ENCODE measurements at regions of chr7 and their contacts with region 1.

Region 1: DNA sequence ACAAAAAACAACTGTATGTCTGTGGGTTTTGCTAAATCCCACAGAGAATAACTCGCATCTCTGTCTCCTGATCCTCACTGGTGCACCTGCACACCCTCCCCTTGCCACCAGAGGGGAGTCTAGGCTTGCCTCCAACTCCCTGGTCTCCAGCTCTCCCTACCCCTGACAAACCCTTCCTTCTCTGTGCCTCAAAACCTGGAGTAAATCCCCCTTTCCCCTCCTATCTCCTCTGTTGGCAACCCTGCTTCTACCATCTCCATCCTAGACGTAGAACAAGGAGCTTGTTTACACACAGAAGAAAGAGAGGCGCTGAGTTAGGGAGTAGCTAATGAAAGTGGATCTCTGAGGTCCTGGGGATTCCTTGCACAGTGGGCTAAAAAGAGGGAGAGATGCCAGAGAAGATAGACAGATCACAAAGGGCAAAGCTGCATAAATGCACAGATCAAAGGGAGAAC is 6.0 kb downstream of the MBLAC1 start:
- DNase-seq: peak; percentile 82
- ATAC-seq: peak; percentile 81
- H3K4me3 Mint-ChIP-seq: no peak overlapping the region
- H3K27ac Mint-ChIP-seq: no peak overlapping the region
- H3K4me1 Mint-ChIP-seq: peaks cover 10% of the 10 kb centered on the region
- H3K27me3 Mint-ChIP-seq: no peaks in the 10 kb centered on the region

Region 2: GRCh38 chr7:99975782-99976521 is 156.8 kb before region 1 on chr7 and contains the start of gene AZGP1:
- CTCF ChIA-PET with region 1: interaction called, 5 read pairs
- POLR2A ChIA-PET with region 1: no interaction called
- intact Hi-C with region 1: loop called in 1 of 2 experiments (anchors 1 kb)
- DNase-seq: no peak
- ATAC-seq: no peak
- H3K4me3 Mint-ChIP-seq: no peak within 1 kb of the TSS
- H3K27ac Mint-ChIP-seq: no peak within 1 kb of the TSS
- H3K4me1 Mint-ChIP-seq: peaks cover 12% of the 10 kb centered on the region
- H3K27me3 Mint-ChIP-seq: peaks cover 4% of the 10 kb centered on the region
- total RNA-seq, gene AZGP1: not detected

Region 3: DNA sequence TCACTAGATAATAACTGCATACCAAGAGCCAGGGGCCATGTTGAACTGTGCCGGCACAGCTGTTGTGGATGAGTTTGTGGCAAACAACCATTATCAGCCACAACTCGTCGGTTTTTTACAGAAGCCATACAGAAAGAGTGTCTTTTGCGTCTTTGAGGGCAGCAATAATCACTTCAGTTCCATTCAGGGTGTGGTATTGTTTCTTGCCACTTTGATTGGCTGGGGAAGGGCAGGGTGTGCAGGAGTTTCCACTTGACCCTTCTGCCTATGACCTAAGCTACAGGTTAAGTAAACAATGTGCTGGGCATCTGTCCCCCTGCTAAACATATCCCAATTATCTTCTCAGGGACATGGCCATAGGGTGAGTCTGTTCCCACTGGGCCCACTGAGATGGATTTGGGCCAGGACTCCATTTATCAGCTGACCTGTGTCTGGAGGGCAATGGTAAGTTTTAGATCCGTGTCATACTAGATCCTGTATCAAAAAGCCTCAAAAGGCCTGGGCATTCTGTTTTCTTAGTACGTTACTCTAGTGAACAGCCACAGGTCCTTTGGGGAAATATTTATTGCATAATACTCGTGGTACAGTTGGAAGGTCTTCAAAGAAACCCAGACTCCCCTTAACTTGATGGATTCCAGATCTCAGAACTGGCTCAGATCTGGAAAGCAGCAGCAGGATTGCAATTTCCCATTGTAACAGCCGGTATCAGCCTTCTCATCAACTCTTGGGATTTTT is 67.1 kb before region 1 on chr7:
- CTCF ChIA-PET with region 1: no interaction called
- POLR2A ChIA-PET with region 1: no interaction called
- intact Hi-C with region 1: no loop called
- DNase-seq: no peak
- ATAC-seq: no peak
- H3K4me3 Mint-ChIP-seq: no peak overlapping the region
- H3K27ac Mint-ChIP-seq: no peak overlapping the region
- H3K4me1 Mint-ChIP-seq: no peaks in the 10 kb centered on the region
- H3K27me3 Mint-ChIP-seq: no peaks in the 10 kb centered on the region

Region 4: GRCh38 chr7:100111914-100112313 is 20.8 kb before region 1 on chr7:
- CTCF ChIA-PET with region 1: interaction called, 30 read pairs
- POLR2A ChIA-PET with region 1: interaction called, 3 read pairs
- intact Hi-C with region 1: no loop called
- DNase-seq: no peak
- ATAC-seq: no peak
- H3K4me3 Mint-ChIP-seq: no peak overlapping the region
- H3K27ac Mint-ChIP-seq: no peak overlapping the region
- H3K4me1 Mint-ChIP-seq: peaks cover 2% of the 10 kb centered on the region
- H3K27me3 Mint-ChIP-seq: no peaks in the 10 kb centered on the region

Region 5: DNA sequence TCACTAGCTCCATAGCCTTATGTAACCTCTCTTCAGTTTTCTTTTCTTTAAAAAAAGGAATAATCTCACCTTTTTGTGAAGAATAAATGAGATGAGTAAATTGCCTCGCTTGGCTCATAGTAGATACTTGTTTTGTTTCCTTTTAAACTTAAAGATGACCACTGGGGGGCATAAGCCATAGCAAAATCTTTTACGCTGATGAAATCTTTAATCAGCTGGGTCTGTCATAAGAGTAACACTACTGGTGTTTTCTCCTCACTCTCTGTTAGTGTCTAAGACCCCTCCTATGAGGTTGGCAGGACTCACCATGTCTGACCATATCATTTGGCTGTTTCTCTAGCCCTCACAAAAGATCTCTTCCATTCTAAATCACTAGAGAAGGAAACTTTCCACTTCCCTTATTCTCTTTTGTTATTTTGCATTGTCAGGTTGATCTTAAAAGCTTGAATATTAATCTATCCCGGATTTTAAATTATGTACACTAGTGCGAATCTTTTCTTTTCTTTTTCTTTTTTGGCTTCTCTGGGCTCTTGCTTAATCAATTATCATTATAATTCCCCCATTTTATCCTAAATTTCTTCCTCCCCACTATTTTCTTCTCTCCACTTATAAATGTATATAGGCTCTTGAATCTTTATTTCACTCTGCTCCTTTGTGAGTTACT is 57.5 kb after region 1 on chr7:
- CTCF ChIA-PET with region 1: interaction called, 17 read pairs
- POLR2A ChIA-PET with region 1: no interaction called
- intact Hi-C with region 1: no loop called
- DNase-seq: no peak
- ATAC-seq: peak; percentile 91
- H3K4me3 Mint-ChIP-seq: no peak overlapping the region
- H3K27ac Mint-ChIP-seq: peak overlapping the region; percentile 81
- H3K4me1 Mint-ChIP-seq: peaks cover 38% of the 10 kb centered on the region
- H3K27me3 Mint-ChIP-seq: no peaks in the 10 kb centered on the region

Region 6: DNA sequence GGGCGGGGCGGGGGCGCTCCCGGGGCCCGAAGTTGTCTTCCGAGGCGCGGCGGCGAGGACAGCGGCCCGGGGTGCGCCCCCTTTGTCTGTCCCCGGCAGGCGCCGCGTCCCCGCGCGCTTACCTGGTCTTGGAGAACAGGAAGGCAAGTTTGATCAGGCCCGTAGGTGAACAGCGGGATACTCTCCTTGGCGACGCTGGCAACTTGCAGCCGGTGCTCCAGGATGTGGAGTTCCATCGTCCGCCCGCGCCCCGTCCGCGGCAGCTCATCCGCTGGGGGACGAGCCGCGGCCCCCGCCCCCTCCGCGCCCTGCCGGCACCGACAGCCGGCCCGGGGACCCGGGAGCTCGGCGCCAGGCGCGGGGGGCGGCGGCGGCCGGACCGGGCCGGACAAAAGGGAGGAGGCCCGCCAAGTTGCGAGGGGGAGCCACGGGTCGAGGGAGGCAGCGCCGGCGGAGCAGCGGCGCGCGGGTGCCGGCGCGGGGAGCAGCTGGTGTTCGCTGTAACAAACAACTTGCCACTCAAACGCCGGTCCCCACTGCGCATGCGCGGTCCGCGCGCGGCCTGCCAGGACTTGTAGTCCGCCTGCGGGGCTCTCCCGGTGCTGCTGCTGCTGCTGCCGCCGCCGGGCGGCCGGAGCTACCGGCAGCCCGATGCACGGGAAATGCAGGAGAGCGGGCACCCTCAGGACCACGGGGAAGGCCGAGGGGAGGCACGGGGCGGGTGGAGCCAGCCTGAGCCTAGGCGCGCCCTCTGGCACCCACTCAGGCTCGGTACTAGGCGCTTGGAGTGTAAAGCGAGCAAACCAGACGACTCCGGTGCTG is 139.2 kb after region 1 on chr7:
- CTCF ChIA-PET with region 1: interaction called, 7 read pairs
- POLR2A ChIA-PET with region 1: no interaction called
- intact Hi-C with region 1: loop called in 1 of 2 experiments (anchors 1 kb)
- DNase-seq: peak; percentile 99
- ATAC-seq: peak; percentile 93
- H3K4me3 Mint-ChIP-seq: peak overlapping the region; percentile 65
- H3K27ac Mint-ChIP-seq: no peak overlapping the region
- H3K4me1 Mint-ChIP-seq: peaks cover 13% of the 10 kb centered on the region
- H3K27me3 Mint-ChIP-seq: no peaks in the 10 kb centered on the region

Region 7: DNA sequence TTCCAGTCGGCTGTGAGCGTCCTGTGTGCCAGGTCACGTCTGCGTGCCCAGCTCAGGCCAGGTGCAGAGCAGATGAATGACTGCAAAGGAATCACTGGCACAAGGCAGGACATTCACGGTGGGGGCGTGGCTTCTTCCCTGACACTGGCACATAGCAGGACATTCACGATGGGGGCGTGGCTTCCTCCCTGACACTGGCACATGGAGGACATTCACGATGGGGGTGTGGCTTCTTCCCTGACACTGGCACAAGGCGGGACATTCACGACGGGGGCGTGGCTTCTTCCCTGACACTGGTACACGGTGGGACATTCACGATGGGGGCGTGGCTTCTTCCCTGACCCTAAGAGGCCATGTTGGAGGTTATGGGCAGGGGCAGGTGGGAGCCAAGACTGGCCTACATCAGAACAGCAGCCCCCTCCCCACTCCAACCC is 1432.1 kb after region 1 on chr7:
- CTCF ChIA-PET with region 1: no interaction called
- POLR2A ChIA-PET with region 1: no interaction called
- intact Hi-C with region 1: no loop called
- DNase-seq: peak; percentile 14
- ATAC-seq: no peak
- H3K4me3 Mint-ChIP-seq: no peak overlapping the region
- H3K27ac Mint-ChIP-seq: no peak overlapping the region
- H3K4me1 Mint-ChIP-seq: peaks cover 2% of the 10 kb centered on the region
- H3K27me3 Mint-ChIP-seq: peaks cover 12% of the 10 kb centered on the region